ENCODE measurements at regions of chr17 and their contacts with region 1.

Region 1: DNA sequence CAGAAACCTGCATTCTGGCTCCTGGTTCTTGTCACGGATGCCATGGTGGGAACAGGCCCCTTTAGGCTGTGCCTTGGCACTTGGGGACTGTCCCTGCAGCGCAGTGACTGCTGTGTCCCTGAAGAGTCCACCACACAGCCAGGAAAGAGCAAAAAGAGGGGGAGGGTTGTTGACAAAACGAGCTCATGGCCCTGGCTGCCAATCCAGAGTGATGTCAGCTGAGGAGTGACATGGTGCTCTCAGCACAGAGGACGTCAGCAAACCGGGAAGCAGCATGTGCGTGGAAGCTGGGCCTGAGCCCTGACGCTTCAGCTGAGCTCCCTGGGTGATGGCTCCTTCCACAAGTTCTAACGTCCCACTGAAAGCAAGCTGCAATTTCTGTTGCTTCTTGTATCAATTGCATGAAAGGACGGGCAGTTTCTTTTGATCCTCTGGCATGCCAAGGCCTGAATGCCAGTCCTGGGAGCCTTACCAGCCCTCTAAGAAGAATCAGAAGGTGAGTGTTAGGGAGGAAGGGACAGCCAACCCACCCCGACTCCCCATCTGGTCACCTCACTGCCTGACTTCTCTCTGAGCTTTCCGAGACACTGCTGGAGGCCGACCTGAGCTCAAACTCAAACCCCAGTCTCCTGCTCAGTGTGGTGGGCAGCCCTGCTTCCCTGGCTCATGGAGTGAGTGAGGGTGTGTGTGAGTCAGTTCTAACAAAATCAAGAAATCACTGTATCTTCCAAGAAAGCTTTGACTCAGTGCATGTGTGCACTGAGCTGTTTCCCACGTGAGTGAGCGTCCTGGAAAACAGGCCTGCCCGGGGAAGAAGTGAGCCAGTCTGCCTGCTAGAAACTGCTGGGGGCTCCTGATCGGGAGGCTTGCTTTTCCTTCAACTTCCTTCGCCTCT is 14.7 kb upstream of the WNT3 start:
- DNase-seq: no peak
- H3K4me3 ChIP-seq: no peak overlapping the region
- H3K27ac ChIP-seq: no peak overlapping the region
- H3K4me1 ChIP-seq: peaks cover 5 to 23% (median 17%) of the 10 kb centered on the region in 4 experiments
- H3K27me3 ChIP-seq: peaks cover 0 to 39% (median 16%) of the 10 kb centered on the region in 4 experiments; a peak in 5 of 7 replicates
- CTCF ChIP-seq: no peak
- EP300 ChIP-seq: no peak
- POLR2A ChIP-seq: no peak
- RAD21 ChIP-seq: no peak

Region 2: GRCh38 chr17:46764709-46765401 is 68.3 kb before region 1 on chr17:
- CTCF ChIA-PET with region 1: interaction called, 10 read pairs
- POLR2A ChIA-PET with region 1: no interaction called
- DNase-seq: peak in 1 of 2 experiments; percentile 44
- H3K4me3 ChIP-seq: no peak overlapping the region
- H3K27ac ChIP-seq: no peak overlapping the region
- H3K4me1 ChIP-seq: peaks cover 0 to 4% (median under 1%) of the 10 kb centered on the region in 4 experiments; a peak in 4 of 7 replicates
- H3K27me3 ChIP-seq: peaks cover 14 to 27% (median 24%) of the 10 kb centered on the region in 4 experiments
- CTCF ChIP-seq: no peak
- EP300 ChIP-seq: no peak
- POLR2A ChIP-seq: no peak
- RAD21 ChIP-seq: no peak

Region 3: DNA sequence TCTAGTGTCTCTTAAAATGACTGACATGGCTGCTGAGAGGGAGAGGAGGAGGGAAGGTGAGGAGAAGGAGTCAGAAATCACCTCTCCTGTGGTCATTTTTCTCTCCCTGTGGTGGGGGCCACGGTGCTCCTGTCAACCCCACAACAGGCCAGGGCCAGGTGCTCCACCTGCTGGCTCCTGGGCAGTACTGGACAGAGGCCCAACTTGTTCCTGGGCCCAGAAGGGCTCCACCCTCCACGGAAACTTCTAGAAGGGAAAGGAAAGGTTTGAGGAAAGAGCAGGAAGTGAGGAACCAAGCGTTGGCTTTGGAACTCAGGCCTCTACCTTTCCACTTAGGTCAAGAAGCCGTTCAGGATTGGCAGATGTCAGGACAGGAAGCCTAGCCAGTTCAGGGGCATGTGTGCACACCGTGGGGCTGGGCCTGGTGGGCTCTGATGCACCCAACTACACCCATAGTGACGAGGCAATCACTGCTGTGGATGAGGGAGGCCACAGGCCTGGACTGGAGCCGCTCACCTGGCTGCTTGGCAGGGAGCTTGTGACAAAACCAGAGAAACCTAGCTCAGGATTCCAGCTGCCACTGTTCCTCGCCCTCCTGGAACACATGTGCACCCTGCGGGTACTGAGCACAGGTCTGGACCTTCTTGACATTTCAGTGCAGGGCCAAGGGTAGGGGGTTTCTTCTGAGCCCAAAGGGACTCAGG is 50.8 kb before region 1 on chr17:
- CTCF ChIA-PET with region 1: interaction called, 81 read pairs
- POLR2A ChIA-PET with region 1: interaction called, 3 read pairs
- DNase-seq: peak in 1 of 2 experiments; percentile 69
- H3K4me3 ChIP-seq: no peak overlapping the region
- H3K27ac ChIP-seq: no peak overlapping the region
- H3K4me1 ChIP-seq: peaks cover 0 to 5% (median 0%) of the 10 kb centered on the region in 4 experiments; a peak in 3 of 7 replicates
- H3K27me3 ChIP-seq: peaks cover 0 to 37% (median 26%) of the 10 kb centered on the region in 4 experiments; a peak in 6 of 7 replicates
- CTCF ChIP-seq: peak; percentile 88 to 91 (median 90)
- EP300 ChIP-seq: no peak
- POLR2A ChIP-seq: no peak
- RAD21 ChIP-seq: peak; percentile 89 to 90

Region 4: GRCh38 chr17:46811978-46812583 is 21.1 kb before region 1 on chr17:
- CTCF ChIA-PET with region 1: interaction called, 15 read pairs
- POLR2A ChIA-PET with region 1: interaction called, 4 read pairs
- DNase-seq: no peak
- H3K4me3 ChIP-seq: no peak overlapping the region
- H3K27ac ChIP-seq: no peak overlapping the region
- H3K4me1 ChIP-seq: peaks cover 0 to 29% (median 7%) of the 10 kb centered on the region in 4 experiments; a peak in 6 of 7 replicates
- H3K27me3 ChIP-seq: peaks cover 7 to 29% (median 23%) of the 10 kb centered on the region in 4 experiments
- CTCF ChIP-seq: no peak
- EP300 ChIP-seq: no peak
- POLR2A ChIP-seq: no peak
- RAD21 ChIP-seq: no peak

Region 5: DNA sequence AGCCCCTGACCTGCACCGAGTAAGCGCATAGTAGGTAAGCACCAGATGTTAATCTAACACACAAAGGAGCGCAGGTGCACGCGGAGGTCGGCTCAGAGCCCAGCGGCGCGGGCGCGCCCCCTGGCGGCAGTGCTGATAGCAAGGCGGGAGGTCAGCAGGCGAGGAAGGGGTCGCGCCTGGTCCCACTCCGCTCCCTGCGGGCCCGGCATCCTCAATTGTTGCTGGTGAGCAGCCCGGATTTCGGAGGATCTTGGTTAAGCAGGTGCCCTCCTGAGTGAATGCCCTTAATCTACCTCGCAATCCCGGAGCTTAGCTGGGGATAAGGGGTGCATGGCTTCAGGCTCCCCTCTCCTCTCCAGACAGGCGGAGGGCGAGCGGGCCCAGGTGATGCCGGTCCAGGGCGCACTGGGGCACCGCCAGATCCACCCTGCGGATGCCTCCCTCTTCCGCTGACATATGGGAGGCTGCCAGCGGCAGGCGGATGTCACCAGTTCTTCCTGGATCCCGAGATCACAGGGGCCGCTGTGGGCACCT is 10.7 kb before region 1 on chr17:
- CTCF ChIA-PET with region 1: interaction called, 49 read pairs
- POLR2A ChIA-PET with region 1: interaction called, 5 read pairs
- DNase-seq: peak in 1 of 2 experiments; percentile 95
- H3K4me3 ChIP-seq: no peak overlapping the region
- H3K27ac ChIP-seq: no peak overlapping the region
- H3K4me1 ChIP-seq: peaks cover 0 to 28% (median 24%) of the 10 kb centered on the region in 4 experiments; a peak in 6 of 7 replicates
- H3K27me3 ChIP-seq: peaks cover 26 to 58% (median 48%) of the 10 kb centered on the region in 4 experiments
- CTCF ChIP-seq: peak; percentile 78 to 93 (median 86)
- EP300 ChIP-seq: no peak
- POLR2A ChIP-seq: no peak
- RAD21 ChIP-seq: peak; percentile 61 to 65

Region 6: DNA sequence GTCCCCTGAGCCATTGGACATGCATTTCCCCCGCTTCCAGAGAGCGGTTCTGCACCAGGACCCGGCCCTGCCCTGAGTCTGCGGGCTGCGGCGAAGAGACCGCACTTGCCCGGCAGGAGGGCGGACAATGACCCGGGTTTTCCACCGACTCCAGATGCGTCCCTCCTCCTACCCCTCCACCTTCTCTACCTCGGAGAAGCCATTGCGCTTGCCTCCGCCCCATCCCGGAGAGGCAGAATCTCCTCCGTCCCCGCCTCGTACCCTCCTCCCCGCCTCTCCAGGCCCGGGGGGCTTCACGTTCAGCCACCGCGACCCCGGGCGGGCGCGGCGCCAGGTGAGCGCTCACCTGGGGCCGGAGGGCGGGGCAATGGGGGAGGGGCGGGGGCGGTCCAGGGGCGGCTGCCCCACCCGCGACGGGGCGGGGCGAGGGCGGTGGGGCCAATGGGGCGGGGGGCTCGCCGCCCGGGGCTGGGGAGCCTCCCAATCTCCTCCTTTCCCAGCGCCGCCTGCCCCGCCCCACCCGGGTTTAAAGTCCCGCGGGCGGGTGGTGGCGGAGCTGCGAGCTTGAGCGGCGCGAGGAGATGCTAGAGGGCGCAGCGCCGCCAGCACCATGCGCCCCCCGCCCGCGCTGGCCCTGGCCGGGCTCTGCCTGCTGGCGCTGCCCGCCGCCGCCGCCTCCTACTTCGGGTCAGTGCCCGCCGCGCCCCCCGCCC is 18.0 kb after region 1 on chr17 and contains the start of gene WNT9B:
- CTCF ChIA-PET with region 1: interaction called, 10 read pairs
- POLR2A ChIA-PET with region 1: no interaction called
- DNase-seq: peak in 1 of 2 experiments; percentile 83
- H3K4me3 ChIP-seq: peak within 1 kb of the TSS; percentile 56 to 87 (median 65)
- H3K27ac ChIP-seq: no peak within 1 kb of the TSS
- H3K4me1 ChIP-seq: peaks cover 0 to 5% (median 3%) of the 10 kb centered on the region in 4 experiments; a peak in 4 of 7 replicates
- H3K27me3 ChIP-seq: peaks cover 20 to 47% (median 38%) of the 10 kb centered on the region in 4 experiments
- CTCF ChIP-seq: peak in 1 of 3 experiments; percentile 2; a peak in 1 of 4 replicates
- EP300 ChIP-seq: no peak
- POLR2A ChIP-seq: no peak
- RAD21 ChIP-seq: no peak
- total RNA-seq, gene WNT9B: not detected in 2 replicates

Region 7: GRCh38 chr17:46876353-46876887 is 43.2 kb after region 1 on chr17:
- CTCF ChIA-PET with region 1: interaction called, 11 read pairs
- POLR2A ChIA-PET with region 1: no interaction called
- DNase-seq: peak in 1 of 2 experiments; percentile 74
- H3K4me3 ChIP-seq: no peak overlapping the region
- H3K27ac ChIP-seq: no peak overlapping the region
- H3K4me1 ChIP-seq: no peaks in the 10 kb centered on the region
- H3K27me3 ChIP-seq: no peaks in the 10 kb centered on the region; a peak in 2 of 7 replicates
- CTCF ChIP-seq: peak; percentile 73 to 79 (median 74)
- EP300 ChIP-seq: no peak
- POLR2A ChIP-seq: no peak
- RAD21 ChIP-seq: peak; percentile 54 to 68; a peak in 3 of 4 replicates

Measured in H1 (cell line).